Activated CD4-positive, alpha-beta T cell treated with anti-CD3 and anti-CD28 coated beads for 36 hours (primary cell): ENCODE measurements at regions of chr3 and their contacts with region 1.

Region 1: DNA sequence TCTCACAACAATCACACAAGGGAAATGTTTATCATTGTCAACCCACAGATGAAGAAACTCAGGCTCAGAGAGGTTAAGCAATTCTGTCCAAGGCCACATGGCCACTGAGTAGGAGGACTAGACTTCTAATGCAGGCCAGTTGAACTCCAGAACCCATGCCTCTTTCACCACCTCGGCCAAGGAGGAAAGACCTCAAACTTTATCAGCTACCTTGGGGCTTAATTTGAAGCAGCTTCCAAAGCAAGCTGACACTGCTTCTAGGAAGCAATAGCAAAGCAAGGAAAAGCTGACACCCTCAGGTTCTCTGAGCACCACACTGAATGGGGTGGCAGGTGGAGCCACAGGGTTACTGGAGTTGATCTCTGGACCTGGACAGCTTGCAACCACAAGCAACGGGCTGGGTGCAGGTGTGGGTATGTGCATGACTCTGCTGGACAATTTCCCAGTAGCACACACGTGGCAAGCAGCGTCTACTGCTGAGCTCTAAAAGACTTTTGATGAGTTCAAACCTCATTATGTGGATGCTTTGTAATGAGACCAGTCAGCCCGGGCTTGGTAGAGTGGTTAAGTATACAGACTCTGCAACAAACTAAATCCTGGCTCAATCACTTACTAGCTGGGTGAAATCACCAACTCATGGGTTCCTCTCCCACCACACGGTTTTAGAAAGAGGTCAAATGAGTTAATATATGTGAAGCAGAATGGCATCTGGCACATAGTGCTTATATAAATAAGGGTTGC is 23.1 kb downstream of the CCNL1 start:
- DNase-seq: no peak
- ATAC-seq: no peak
- H3K4me3 Mint-ChIP-seq: no peak overlapping the region
- H3K27ac Mint-ChIP-seq: peak overlapping the region; percentile 39
- H3K4me1 Mint-ChIP-seq: peaks cover 33% of the 10 kb centered on the region
- H3K27me3 Mint-ChIP-seq: no peaks in the 10 kb centered on the region

Region 2: DNA sequence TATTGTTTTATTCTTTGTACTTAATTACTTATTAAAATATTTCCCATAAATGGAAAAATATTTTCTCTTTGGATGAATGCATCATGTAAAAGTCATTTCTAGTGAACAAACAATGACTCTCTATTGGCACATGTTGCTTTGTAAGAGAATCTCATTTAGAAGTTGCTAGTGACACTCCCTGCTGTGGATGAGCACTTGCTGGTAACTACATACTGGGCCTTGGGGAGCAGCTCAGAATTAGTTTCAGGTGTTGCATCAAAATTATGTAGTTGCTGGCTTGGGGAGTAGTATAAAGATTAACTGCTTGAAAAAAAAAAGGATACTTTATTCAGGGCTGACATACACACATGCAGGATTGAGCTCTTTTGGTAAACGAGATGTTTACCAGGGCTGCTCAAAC is 1096.8 kb before region 1 on chr3:
- CTCF ChIA-PET with region 1: no interaction called
- POLR2A ChIA-PET with region 1: no interaction called
- intact Hi-C with region 1: loop called in 1 of 2 experiments (anchors 2 kb)
- DNase-seq: no peak
- ATAC-seq: no peak
- H3K4me3 Mint-ChIP-seq: no peak overlapping the region
- H3K27ac Mint-ChIP-seq: no peak overlapping the region
- H3K4me1 Mint-ChIP-seq: no peaks in the 10 kb centered on the region
- H3K27me3 Mint-ChIP-seq: peaks cover 5% of the 10 kb centered on the region

Region 3: DNA sequence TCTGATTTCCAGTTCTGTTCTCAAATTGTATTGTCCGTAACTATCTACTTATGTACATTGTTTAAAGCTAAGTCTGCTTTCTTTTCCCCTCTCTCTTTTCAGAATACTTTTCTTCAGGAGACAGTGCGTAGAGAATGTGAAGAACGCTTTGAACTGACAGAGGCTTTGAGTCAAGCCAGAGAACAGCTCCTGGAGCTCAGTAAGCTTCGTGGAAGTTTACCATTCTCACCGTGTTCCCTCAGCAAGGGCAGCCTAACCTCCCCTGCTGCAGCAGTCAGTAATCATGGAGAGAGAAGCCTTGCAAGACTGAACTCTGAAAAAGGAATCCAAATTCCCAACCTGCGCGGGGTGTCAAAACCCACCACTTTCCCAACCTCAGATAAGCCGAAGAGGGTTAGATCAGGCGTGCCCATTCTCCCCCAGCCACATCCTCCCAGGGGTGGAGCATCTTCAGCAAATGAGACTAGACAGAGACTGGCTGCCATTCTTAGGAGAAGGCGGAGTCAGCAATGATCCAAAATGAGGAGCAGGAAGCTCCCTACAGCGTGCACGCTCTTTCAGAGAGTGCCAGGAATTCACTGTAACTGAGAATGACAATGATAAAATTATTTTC is 91.5 kb before region 1 on chr3:
- CTCF ChIA-PET with region 1: no interaction called
- POLR2A ChIA-PET with region 1: no interaction called
- intact Hi-C with region 1: no loop called
- DNase-seq: no peak
- ATAC-seq: no peak
- H3K4me3 Mint-ChIP-seq: no peak overlapping the region
- H3K27ac Mint-ChIP-seq: no peak overlapping the region
- H3K4me1 Mint-ChIP-seq: no peaks in the 10 kb centered on the region
- H3K27me3 Mint-ChIP-seq: peaks cover 9% of the 10 kb centered on the region

Region 4: GRCh38 chr3:157081681-157082210 is 55.1 kb before region 1 on chr3:
- CTCF ChIA-PET with region 1: interaction called, 93 read pairs
- POLR2A ChIA-PET with region 1: interaction called, 3 read pairs
- intact Hi-C with region 1: no loop called
- DNase-seq: peak; percentile 90
- ATAC-seq: peak; percentile 91
- H3K4me3 Mint-ChIP-seq: no peak overlapping the region
- H3K27ac Mint-ChIP-seq: peak overlapping the region; percentile 66
- H3K4me1 Mint-ChIP-seq: peaks cover 32% of the 10 kb centered on the region
- H3K27me3 Mint-ChIP-seq: no peaks in the 10 kb centered on the region

Region 5: DNA sequence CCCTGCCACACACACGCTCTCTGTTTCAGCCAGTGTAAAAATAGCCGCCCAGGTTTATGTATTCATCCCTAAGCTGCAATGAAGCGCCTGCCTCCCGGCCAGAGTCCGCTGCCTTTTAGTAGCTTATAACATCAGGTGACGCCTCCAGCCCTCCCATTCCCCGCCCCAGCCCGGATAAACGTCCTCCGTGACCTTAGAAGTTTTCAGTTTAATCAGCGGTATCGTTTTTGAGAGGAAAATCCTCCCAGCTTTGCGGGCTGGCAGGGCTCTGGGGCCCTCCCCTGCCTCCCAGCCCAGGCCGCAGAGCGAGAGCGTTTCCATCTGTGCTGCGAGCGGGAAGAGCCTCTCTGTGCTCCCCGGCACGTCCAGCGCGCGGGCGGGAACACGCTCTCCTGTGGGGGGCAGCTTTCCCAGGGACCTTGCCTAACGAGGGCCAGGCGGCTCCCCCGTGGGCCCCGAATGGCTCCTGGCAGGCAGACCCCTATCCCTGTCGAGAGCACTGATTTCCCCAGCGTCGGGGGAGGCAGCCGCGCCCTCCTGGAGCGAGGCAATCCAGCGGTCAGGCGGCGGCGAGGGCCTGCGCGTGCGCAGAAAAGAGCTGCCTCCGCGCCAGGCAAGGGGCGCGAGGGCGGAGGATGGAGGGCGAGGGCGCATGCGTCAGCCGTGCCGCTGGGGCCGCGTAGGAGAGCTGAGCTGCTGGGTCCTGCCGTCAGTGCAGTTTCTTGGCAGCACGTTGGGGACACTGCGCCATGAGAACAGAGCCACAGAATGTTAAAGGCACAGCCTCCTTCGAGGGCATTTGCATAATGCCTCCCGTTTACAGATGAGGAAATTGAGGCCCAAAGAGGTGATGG is 48.0 kb before region 1 on chr3:
- CTCF ChIA-PET with region 1: interaction called, 93 read pairs
- POLR2A ChIA-PET with region 1: interaction called, 3 read pairs
- intact Hi-C with region 1: no loop called
- DNase-seq: peak; percentile 97
- ATAC-seq: peak; percentile 79
- H3K4me3 Mint-ChIP-seq: peak overlapping the region; percentile 72
- H3K27ac Mint-ChIP-seq: peak overlapping the region; percentile 97
- H3K4me1 Mint-ChIP-seq: peaks cover 71% of the 10 kb centered on the region
- H3K27me3 Mint-ChIP-seq: peaks cover 1% of the 10 kb centered on the region

Region 6: DNA sequence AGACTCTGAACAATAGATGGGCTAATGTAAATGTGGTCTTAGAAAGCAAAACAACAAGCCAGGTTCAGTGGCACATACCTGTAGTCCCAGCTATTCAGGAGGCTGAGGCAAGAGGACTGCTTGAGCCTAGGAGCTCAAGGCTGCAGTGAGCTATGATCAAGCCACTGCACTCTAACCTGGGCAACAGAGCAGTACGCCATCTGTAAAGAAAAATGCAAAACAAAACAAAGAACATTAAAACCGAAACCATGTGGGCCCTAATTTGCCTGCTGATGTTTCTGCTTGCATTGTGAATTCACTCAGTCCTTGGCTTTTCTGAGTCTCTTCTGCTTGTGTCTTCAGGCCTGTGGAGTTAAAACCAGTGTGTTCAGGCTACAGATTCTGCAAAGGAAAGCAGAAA is 33.5 kb before region 1 on chr3:
- CTCF ChIA-PET with region 1: interaction called, 11 read pairs
- POLR2A ChIA-PET with region 1: no interaction called
- intact Hi-C with region 1: no loop called
- DNase-seq: peak; percentile 47
- ATAC-seq: peak; percentile 65
- H3K4me3 Mint-ChIP-seq: no peak overlapping the region
- H3K27ac Mint-ChIP-seq: peak overlapping the region; percentile 88
- H3K4me1 Mint-ChIP-seq: peaks cover 51% of the 10 kb centered on the region
- H3K27me3 Mint-ChIP-seq: no peaks in the 10 kb centered on the region

Region 7: GRCh38 chr3:157148196-157148889 is 11.5 kb after region 1 on chr3:
- CTCF ChIA-PET with region 1: interaction called, 44 read pairs
- POLR2A ChIA-PET with region 1: interaction called, 13 read pairs
- intact Hi-C with region 1: no loop called
- DNase-seq: peak; percentile 43
- ATAC-seq: peak; percentile 74
- H3K4me3 Mint-ChIP-seq: peak overlapping the region; percentile 27
- H3K27ac Mint-ChIP-seq: peak overlapping the region; percentile 74
- H3K4me1 Mint-ChIP-seq: peaks cover 45% of the 10 kb centered on the region
- H3K27me3 Mint-ChIP-seq: no peaks in the 10 kb centered on the region

Region 8: DNA sequence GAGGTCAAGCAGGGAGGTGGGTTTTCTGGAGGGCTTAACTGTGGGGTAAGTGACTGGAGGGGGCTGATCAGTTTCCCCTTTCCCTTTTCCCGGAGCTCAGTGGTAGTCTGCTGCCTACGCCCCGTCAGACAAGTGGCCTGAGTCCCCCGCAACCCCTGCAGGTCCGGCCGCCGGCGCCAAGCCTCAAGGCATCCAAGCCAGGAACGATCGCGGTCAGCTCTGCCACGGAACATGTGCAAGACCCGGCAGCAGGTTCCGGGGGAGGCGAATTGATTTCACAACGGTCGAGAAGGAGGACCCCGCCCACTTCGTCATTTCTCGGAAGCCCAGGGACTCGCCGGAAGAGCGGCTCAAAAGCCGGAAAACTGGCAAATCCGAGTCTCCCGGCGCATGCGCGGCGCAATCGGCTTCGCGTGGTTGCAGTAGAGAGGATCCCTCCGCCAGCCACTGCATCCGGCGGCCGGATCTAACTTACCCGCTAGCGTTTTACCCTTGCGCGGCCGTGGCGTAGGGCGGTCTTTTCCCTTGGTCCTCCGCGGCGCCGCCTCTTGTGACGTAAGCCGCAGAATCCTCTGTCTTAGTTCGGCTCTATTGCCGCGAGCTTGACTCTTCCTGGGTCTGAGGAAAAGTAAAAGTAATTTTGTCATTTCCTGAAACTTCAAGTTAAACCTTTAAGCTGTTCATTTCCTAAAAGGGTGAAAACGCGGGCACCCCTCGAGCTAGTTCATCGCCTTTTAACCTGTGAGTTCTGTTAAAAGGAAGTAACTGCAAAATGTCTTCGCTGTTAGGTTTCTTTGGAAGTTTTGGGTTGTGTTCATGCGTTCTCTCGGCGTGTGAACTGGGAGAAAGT is 38.1 kb after region 1 on chr3:
- CTCF ChIA-PET with region 1: interaction called, 10 read pairs
- POLR2A ChIA-PET with region 1: no interaction called
- intact Hi-C with region 1: no loop called
- DNase-seq: peak; percentile 99
- ATAC-seq: peak; percentile 95
- H3K4me3 Mint-ChIP-seq: peak overlapping the region; percentile 94
- H3K27ac Mint-ChIP-seq: peak overlapping the region; percentile 99
- H3K4me1 Mint-ChIP-seq: peaks cover 20% of the 10 kb centered on the region
- H3K27me3 Mint-ChIP-seq: no peaks in the 10 kb centered on the region